Activated CD4-positive, alpha-beta T cell treated with anti-CD3 and anti-CD28 coated beads, Interleukin-2, amount 10 ng/mL, durations not matched to agents 24 days and 14 days (primary cell): ENCODE measurements at regions of chr2 and their contacts with region 1.

Region 1: GRCh38 chr2:145511946-145512345 is 992.0 kb upstream of the ZEB2 start:
- DNase-seq: no peak
- H3K4me3 Mint-ChIP-seq: no peak overlapping the region
- H3K27ac Mint-ChIP-seq: no peak overlapping the region
- H3K4me1 Mint-ChIP-seq: no peaks in the 10 kb centered on the region
- H3K27me3 Mint-ChIP-seq: no peaks in the 10 kb centered on the region

Region 2: DNA sequence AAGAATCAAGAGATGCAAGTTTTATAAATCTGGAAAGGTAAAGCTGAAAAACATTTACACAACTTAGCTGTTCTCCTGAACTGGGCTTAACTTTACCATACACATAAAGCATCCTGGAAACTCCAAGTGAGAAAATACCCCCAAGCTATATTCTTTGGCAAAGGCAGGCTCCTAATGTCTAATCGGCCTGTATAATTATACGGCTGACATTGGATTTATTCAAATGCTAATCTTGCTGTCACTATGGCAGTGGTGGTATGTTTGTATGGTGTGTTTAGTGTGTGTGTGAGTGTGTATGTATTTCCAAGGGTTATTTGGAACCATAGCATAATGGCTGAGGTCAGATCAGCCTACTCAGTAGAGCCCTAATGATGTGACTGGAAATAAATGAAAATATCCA is 39.7 kb after region 1 on chr2:
- intact Hi-C with region 1: loop called (anchors 1 kb)
- DNase-seq: no peak
- H3K4me3 Mint-ChIP-seq: no peak overlapping the region
- H3K27ac Mint-ChIP-seq: no peak overlapping the region
- H3K4me1 Mint-ChIP-seq: no peaks in the 10 kb centered on the region
- H3K27me3 Mint-ChIP-seq: no peaks in the 10 kb centered on the region

Region 3: DNA sequence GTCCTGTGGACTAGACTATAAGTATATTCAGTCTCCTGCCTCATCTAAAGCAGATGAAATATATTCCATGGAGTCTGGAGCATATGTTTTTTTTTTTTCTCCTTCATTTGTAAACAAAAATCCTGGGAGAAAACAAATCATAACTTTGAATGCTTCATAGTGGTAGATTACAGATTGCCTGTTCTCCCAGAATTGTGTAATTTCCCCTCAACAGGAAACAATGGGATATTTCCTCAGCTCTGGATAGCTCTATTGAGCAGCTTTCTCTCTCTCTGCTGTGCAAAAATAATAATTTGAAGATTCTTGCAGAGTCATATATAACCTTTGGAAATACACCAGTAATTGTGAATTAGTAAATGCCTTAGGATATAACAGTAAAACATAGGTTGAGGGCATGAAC is 926.3 kb after region 1 on chr2:
- intact Hi-C with region 1: no loop called
- DNase-seq: no peak
- H3K4me3 Mint-ChIP-seq: no peak overlapping the region
- H3K27ac Mint-ChIP-seq: no peak overlapping the region
- H3K4me1 Mint-ChIP-seq: no peaks in the 10 kb centered on the region
- H3K27me3 Mint-ChIP-seq: no peaks in the 10 kb centered on the region